ENCODE measurements at regions of chr19 and their contacts with region 1.

Region 1: DNA sequence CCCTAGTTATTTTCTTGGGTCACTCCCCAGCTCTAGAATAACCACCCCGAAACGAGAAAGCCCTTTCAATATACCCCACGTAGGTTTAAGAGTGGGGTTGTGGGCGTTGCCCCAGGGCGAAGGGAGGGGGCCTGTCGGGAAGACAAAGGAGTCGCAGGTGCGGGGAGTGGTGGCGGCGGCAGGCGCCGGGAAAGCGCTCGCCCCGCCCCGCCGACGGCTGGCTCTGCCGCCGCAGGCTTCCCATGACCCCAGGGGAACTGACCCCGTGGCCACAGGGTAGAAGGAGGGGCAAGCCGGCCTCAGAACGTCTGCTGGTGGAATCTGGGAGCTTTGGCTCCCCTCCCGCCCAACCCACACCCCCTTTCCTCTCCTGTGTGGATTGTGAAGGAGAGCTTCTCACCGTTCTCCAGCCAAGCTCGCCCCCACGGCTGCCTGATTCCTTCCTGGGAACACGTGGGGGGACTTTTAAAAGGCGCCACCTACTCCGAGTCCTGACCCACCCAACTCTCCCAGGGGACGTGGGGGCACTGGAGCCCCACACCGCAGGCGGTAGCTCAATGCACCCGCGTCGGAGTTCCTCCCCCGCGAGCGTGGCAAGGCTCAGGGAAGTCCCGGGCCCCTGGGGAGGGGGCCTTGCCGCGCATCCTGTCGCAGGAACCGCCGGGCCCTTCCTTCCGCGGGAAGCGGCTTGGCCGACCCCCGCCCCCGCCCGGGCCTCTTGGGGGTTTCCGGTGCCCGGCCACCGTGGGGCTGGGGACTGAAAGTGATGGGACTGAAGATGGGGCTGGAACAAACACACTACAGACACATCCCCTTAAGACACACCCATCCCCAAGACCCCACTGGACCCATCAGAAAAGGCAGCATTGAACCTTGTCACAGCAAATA is 5.5 kb downstream of the IER2 start:
- DNase-seq: peak; percentile 89 to 93
- H3K4me3 ChIP-seq: peak overlapping the region; percentile 99
- H3K27ac ChIP-seq: peak overlapping the region; percentile 98
- H3K4me1 ChIP-seq: peaks cover 22% of the 10 kb centered on the region
- H3K27me3 ChIP-seq: no peaks in the 10 kb centered on the region
- CTCF ChIP-seq: no peak

Region 2: GRCh38 chr19:13051267-13052165 is 104.2 kb before region 1 on chr19:
- CTCF ChIA-PET with region 1: no interaction called
- POLR2A ChIA-PET with region 1: no interaction called
- intact Hi-C with region 1: loop called (anchors 5 kb)
- DNase-seq: peak; percentile 85 to 93
- H3K4me3 ChIP-seq: peak overlapping the region; percentile 39; the same call in 1 of the 2 replicates
- H3K27ac ChIP-seq: no peak overlapping the region
- H3K4me1 ChIP-seq: peaks cover 41% of the 10 kb centered on the region
- H3K27me3 ChIP-seq: peaks cover 53% of the 10 kb centered on the region
- CTCF ChIP-seq: no peak

Region 3: GRCh38 chr19:13195678-13196077 is 40.0 kb after region 1 on chr19:
- CTCF ChIA-PET with region 1: no interaction called
- POLR2A ChIA-PET with region 1: no interaction called
- intact Hi-C with region 1: loop called (anchors 2 kb)
- DNase-seq: peak; percentile 29 to 41
- H3K4me3 ChIP-seq: no peak overlapping the region
- H3K27ac ChIP-seq: no peak overlapping the region
- H3K4me1 ChIP-seq: peaks cover 8% of the 10 kb centered on the region
- H3K27me3 ChIP-seq: no peaks in the 10 kb centered on the region
- CTCF ChIP-seq: peak; percentile 50

Measured in PC-9 (cell line).